ENCODE measurements at regions of chr7 and their contacts with region 1.

Region 1: DNA sequence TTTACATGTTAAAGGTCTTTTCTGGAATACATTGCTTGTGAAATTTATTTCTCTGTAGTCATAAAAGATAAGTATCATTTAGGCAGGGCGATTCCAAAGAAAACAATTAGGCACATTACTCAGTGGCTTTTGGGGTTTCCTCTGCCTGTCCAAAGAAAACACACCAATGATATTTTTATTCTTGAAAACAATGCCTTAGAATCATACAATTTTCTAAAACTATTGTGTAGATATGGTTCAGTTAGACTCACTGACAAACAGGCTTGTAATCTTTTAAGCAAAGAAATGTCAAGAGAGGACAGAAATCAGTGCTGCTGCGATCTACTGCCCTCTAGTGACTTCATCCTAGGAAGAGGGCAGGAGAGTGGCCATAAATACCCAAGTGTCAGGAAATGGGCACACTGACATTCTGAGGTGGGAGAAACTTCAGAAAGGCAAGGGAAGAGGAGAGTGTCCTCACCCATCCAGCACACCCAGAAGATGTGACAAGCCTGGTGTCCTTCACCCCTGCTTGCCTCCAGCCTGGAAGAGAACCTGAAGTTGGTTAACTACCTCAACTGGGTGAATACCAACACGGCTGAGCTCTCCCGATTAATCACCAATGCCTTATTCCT is 120.5 kb downstream of the GALNT11 start:
- DNase-seq: peak; percentile 62
- H3K4me3 Mint-ChIP-seq: no peak overlapping the region
- H3K27ac Mint-ChIP-seq: peak overlapping the region; percentile 87
- H3K4me1 Mint-ChIP-seq: peaks cover 40% of the 10 kb centered on the region
- H3K27me3 Mint-ChIP-seq: no peaks in the 10 kb centered on the region

Region 2: GRCh38 chr7:151769188-151769841 is 376.6 kb before region 1 on chr7:
- CTCF ChIA-PET with region 1: no interaction called
- intact Hi-C with region 1: loop called (anchors 5 kb)
- DNase-seq: peak; percentile 62
- H3K4me3 Mint-ChIP-seq: peak overlapping the region; percentile 10
- H3K27ac Mint-ChIP-seq: peak overlapping the region; percentile 86
- H3K4me1 Mint-ChIP-seq: peaks cover 51% of the 10 kb centered on the region
- H3K27me3 Mint-ChIP-seq: no peaks in the 10 kb centered on the region

Region 3: GRCh38 chr7:151883857-151884256 is 262.1 kb before region 1 on chr7:
- CTCF ChIA-PET with region 1: no interaction called
- intact Hi-C with region 1: no loop called
- DNase-seq: no peak
- H3K4me3 Mint-ChIP-seq: no peak overlapping the region
- H3K27ac Mint-ChIP-seq: no peak overlapping the region
- H3K4me1 Mint-ChIP-seq: no peaks in the 10 kb centered on the region
- H3K27me3 Mint-ChIP-seq: peaks cover 7% of the 10 kb centered on the region

Region 4: GRCh38 chr7:151936207-151936606 is 209.8 kb before region 1 on chr7:
- CTCF ChIA-PET with region 1: interaction called, 3 read pairs
- intact Hi-C with region 1: loop called (anchors 1 kb)
- DNase-seq: no peak
- H3K4me3 Mint-ChIP-seq: peak overlapping the region; percentile 45
- H3K27ac Mint-ChIP-seq: peak overlapping the region; percentile 73
- H3K4me1 Mint-ChIP-seq: peaks cover 30% of the 10 kb centered on the region
- H3K27me3 Mint-ChIP-seq: no peaks in the 10 kb centered on the region

Region 5: GRCh38 chr7:152025077-152025936 is 120.7 kb before region 1 on chr7 and contains the start of gene GALNT11:
- CTCF ChIA-PET with region 1: interaction called, 3 read pairs
- intact Hi-C with region 1: loop called (anchors 1 kb)
- DNase-seq: peak; percentile 81
- H3K4me3 Mint-ChIP-seq: peak within 1 kb of the TSS; percentile 80
- H3K27ac Mint-ChIP-seq: peak within 1 kb of the TSS; percentile 77
- H3K4me1 Mint-ChIP-seq: peaks cover 30% of the 10 kb centered on the region
- H3K27me3 Mint-ChIP-seq: no peaks in the 10 kb centered on the region
- total RNA-seq, gene GALNT11: 15.6 to 19.8 TPM

Region 6: GRCh38 chr7:152158801-152159587 is 13.0 kb after region 1 on chr7:
- CTCF ChIA-PET with region 1: interaction called, 4 read pairs
- intact Hi-C with region 1: loop called (anchors 1 kb)
- DNase-seq: peak; percentile 24
- H3K4me3 Mint-ChIP-seq: no peak overlapping the region
- H3K27ac Mint-ChIP-seq: peak overlapping the region; percentile 42
- H3K4me1 Mint-ChIP-seq: peaks cover 12% of the 10 kb centered on the region
- H3K27me3 Mint-ChIP-seq: no peaks in the 10 kb centered on the region

Region 7: GRCh38 chr7:152675759-152676636 is 530.0 kb after region 1 on chr7 and contains the start of gene XRCC2:
- CTCF ChIA-PET with region 1: no interaction called
- intact Hi-C with region 1: loop called (anchors 2 kb)
- DNase-seq: peak; percentile 93
- H3K4me3 Mint-ChIP-seq: peak within 1 kb of the TSS; percentile 96
- H3K27ac Mint-ChIP-seq: peak within 1 kb of the TSS; percentile 93
- H3K4me1 Mint-ChIP-seq: peaks cover 11% of the 10 kb centered on the region
- H3K27me3 Mint-ChIP-seq: no peaks in the 10 kb centered on the region
- total RNA-seq, gene XRCC2: 10.3 to 10.8 TPM